IMR-90 (cell line): ENCODE measurements at regions of chr12 and their contacts with region 1.

Region 1: GRCh38 chr12:30795410-30796312 is 40.9 kb upstream of the CAPRIN2 start:
- DNase-seq: peak; percentile 80
- ATAC-seq: peak; percentile 78
- H3K4me3 ChIP-seq: peak overlapping the region; percentile 61
- H3K27ac ChIP-seq: peak overlapping the region; percentile 93
- H3K4me1 ChIP-seq: peaks cover 17% of the 10 kb centered on the region
- H3K27me3 ChIP-seq: no peaks in the 10 kb centered on the region
- CTCF ChIP-seq: 0 out of 2 replicates have a peak, but pooled peaks have one; percentile 6
- POLR2A ChIP-seq: peak; percentile 86
- RAD21 ChIP-seq: no peak

Region 2: GRCh38 chr12:29782285-29782870 is 1013.3 kb before region 1 on chr12:
- CTCF ChIA-PET with region 1: no interaction called
- POLR2A ChIA-PET with region 1: no interaction called
- dilution Hi-C with region 1: no loop called
- in situ Hi-C with region 1: no loop called
- intact Hi-C with region 1: loop called (anchors 5 kb)
- DNase-seq: peak; percentile 71
- ATAC-seq: peak; percentile 4
- H3K4me3 ChIP-seq: peak overlapping the region; percentile 95
- H3K27ac ChIP-seq: peak overlapping the region; percentile 89
- H3K4me1 ChIP-seq: peaks cover 4% of the 10 kb centered on the region
- H3K27me3 ChIP-seq: peaks cover 3% of the 10 kb centered on the region; the same call in 1 of the 2 replicates
- CTCF ChIP-seq: no peak
- POLR2A ChIP-seq: no peak
- RAD21 ChIP-seq: 0 out of 2 replicates have a peak, but pooled peaks have one; percentile 3

Region 3: GRCh38 chr12:30012816-30013449 is 782.7 kb before region 1 on chr12:
- CTCF ChIA-PET with region 1: no interaction called
- POLR2A ChIA-PET with region 1: no interaction called
- dilution Hi-C with region 1: no loop called
- in situ Hi-C with region 1: no loop called
- intact Hi-C with region 1: no loop called
- DNase-seq: no peak
- ATAC-seq: no peak
- H3K4me3 ChIP-seq: no peak overlapping the region
- H3K27ac ChIP-seq: no peak overlapping the region
- H3K4me1 ChIP-seq: no peaks in the 10 kb centered on the region
- H3K27me3 ChIP-seq: no peaks in the 10 kb centered on the region; the same call in 1 of the 2 replicates
- CTCF ChIP-seq: no peak
- POLR2A ChIP-seq: no peak
- RAD21 ChIP-seq: no peak

Region 4: DNA sequence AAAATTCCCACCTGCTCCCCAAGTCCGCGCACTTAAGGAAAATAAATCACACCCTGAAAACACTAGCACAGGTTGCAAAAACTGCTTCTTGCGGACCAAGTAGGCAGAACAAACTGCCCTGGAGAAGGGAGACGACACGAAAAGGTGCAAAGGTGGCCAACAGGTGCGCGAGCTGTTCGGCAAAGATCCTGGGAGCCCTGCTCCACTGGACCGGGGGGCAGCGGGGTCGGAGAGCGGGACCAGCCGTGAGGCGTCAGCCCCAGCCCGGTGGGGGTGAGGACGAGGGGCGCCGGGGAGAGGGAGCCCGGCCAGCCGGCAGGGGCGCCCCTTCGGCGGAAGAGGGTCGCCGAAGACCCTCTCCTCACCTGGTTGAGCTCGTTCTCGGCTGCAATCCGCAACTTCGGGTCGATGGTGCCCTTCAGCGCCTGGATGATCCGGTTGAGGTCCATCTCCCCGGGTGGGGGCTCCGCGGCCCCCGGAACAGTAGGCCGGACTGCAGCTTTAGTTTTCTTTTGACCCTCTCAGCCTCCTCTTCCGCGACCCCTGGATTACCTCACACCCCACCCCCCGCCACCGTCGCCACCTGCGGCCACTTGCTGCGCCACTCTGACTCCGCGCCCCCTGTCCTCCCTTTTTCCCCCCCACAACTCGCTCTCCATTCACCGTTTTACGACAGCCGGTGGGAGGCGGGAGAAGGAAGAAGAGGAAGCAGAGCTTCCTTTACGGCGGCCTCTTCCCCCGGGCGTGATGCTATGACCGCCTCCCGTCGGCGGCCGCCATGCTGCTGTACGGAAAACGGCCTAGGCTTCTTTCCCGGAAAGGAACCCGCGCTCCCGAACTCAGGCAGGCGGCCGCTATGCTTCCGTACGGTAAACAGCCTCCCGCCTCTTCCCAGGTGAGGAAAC is 100.2 kb before region 1 on chr12 and contains the start of gene IPO8:
- CTCF ChIA-PET with region 1: no interaction called
- POLR2A ChIA-PET with region 1: no interaction called
- dilution Hi-C with region 1: no loop called
- in situ Hi-C with region 1: no loop called
- intact Hi-C with region 1: loop called (anchors 1 kb)
- DNase-seq: peak; percentile 89
- ATAC-seq: peak; percentile 91
- H3K4me3 ChIP-seq: peak within 1 kb of the TSS; percentile 100
- H3K27ac ChIP-seq: peak within 1 kb of the TSS; percentile 77
- H3K4me1 ChIP-seq: peaks cover 6% of the 10 kb centered on the region
- H3K27me3 ChIP-seq: no peaks in the 10 kb centered on the region
- CTCF ChIP-seq: peak; percentile 23; the same call in 1 of the 2 replicates
- POLR2A ChIP-seq: no peak; the same call in 1 of the 2 replicates
- RAD21 ChIP-seq: 0 out of 2 replicates have a peak, but pooled peaks have one; percentile 3
- total RNA-seq, gene IPO8: 31.5 and 31.9 TPM in 2 replicates

Region 5: DNA sequence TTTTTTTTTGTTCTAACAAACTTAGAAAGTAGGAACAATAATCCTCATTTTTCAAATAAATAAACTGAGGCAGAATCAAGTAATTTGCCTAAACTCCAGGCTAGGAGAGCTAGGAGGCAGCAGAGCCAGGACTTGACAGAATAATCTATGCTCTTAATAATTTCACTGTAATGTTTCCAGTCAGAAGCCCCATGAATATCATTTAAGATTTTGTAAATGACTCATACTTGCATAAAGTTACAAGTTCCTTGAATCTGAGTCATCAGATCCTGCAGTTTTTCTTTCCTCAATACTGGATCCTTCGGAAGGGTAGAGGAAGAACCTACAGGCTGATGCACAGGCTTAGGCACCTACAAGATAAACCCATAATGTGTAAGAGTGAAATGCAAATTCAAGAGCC is 69.9 kb before region 1 on chr12:
- CTCF ChIA-PET with region 1: no interaction called
- POLR2A ChIA-PET with region 1: no interaction called
- dilution Hi-C with region 1: no loop called
- in situ Hi-C with region 1: no loop called
- intact Hi-C with region 1: loop called (anchors 2 kb)
- DNase-seq: peak; percentile 84
- ATAC-seq: peak; percentile 97
- H3K4me3 ChIP-seq: no peak overlapping the region
- H3K27ac ChIP-seq: no peak overlapping the region
- H3K4me1 ChIP-seq: peaks cover 1% of the 10 kb centered on the region
- H3K27me3 ChIP-seq: no peaks in the 10 kb centered on the region
- CTCF ChIP-seq: no peak
- POLR2A ChIP-seq: no peak
- RAD21 ChIP-seq: no peak

Region 6: GRCh38 chr12:30744321-30744720 is 51.3 kb before region 1 on chr12:
- CTCF ChIA-PET with region 1: no interaction called
- POLR2A ChIA-PET with region 1: no interaction called
- dilution Hi-C with region 1: no loop called
- in situ Hi-C with region 1: no loop called
- intact Hi-C with region 1: no loop called
- DNase-seq: no peak
- ATAC-seq: no peak
- H3K4me3 ChIP-seq: no peak overlapping the region
- H3K27ac ChIP-seq: no peak overlapping the region
- H3K4me1 ChIP-seq: no peaks in the 10 kb centered on the region
- H3K27me3 ChIP-seq: no peaks in the 10 kb centered on the region
- CTCF ChIP-seq: no peak
- POLR2A ChIP-seq: no peak
- RAD21 ChIP-seq: no peak

Region 7: GRCh38 chr12:30754709-30755394 is 40.8 kb before region 1 on chr12 and contains the start of gene CAPRIN2:
- CTCF ChIA-PET with region 1: interaction called, 3 read pairs
- POLR2A ChIA-PET with region 1: interaction called, 3 read pairs
- dilution Hi-C with region 1: no loop called
- in situ Hi-C with region 1: no loop called
- intact Hi-C with region 1: loop called (anchors 1 kb)
- DNase-seq: peak; percentile 93
- ATAC-seq: peak; percentile 99
- H3K4me3 ChIP-seq: peak within 1 kb of the TSS; percentile 86
- H3K27ac ChIP-seq: peak within 1 kb of the TSS; percentile 67
- H3K4me1 ChIP-seq: peaks cover 10% of the 10 kb centered on the region
- H3K27me3 ChIP-seq: no peaks in the 10 kb centered on the region
- CTCF ChIP-seq: peak; percentile 43
- POLR2A ChIP-seq: peak; percentile 67
- RAD21 ChIP-seq: peak; percentile 14; the same call in 1 of the 2 replicates
- total RNA-seq, gene CAPRIN2: 23.1 and 23.8 TPM in 2 replicates

Region 8: GRCh38 chr12:30822385-30823155 is 26.9 kb after region 1 on chr12:
- CTCF ChIA-PET with region 1: interaction called, 3 read pairs
- POLR2A ChIA-PET with region 1: no interaction called
- dilution Hi-C with region 1: no loop called
- in situ Hi-C with region 1: no loop called
- intact Hi-C with region 1: loop called (anchors 1 kb)
- DNase-seq: peak; percentile 10
- ATAC-seq: peak; percentile 83
- H3K4me3 ChIP-seq: peak overlapping the region; percentile 27
- H3K27ac ChIP-seq: no peak overlapping the region
- H3K4me1 ChIP-seq: peaks cover 3% of the 10 kb centered on the region; the same call in 1 of the 2 replicates
- H3K27me3 ChIP-seq: peaks cover 21% of the 10 kb centered on the region
- CTCF ChIP-seq: no peak
- POLR2A ChIP-seq: no peak
- RAD21 ChIP-seq: no peak